CD14-positive monocyte (primary cell): ENCODE measurements at regions of chr1 and their contacts with region 1.

Region 1: GRCh38 chr1:204506961-204507387 is 9.2 kb upstream of the MDM4 start:
- DNase-seq: peak; percentile 93 to 94 (median 93)
- H3K4me3 ChIP-seq: peak overlapping the region; percentile 53 to 96 (median 88)
- H3K4me3 Mint-ChIP-seq: peak overlapping the region; percentile 92 to 95
- H3K27ac ChIP-seq: peak overlapping the region; percentile 72 to 91
- H3K27ac Mint-ChIP-seq: peak overlapping the region; percentile 85 to 95 (median 93)
- H3K4me1 ChIP-seq: peaks cover 32 to 38% of the 10 kb centered on the region in 2 donors
- H3K4me1 Mint-ChIP-seq: peaks cover 37% of the 10 kb centered on the region
- H3K27me3 ChIP-seq: no peaks in the 10 kb centered on the region
- H3K27me3 Mint-ChIP-seq: peaks cover 0 to 2% (median 0%) of the 10 kb centered on the region in 3 donors
- CTCF ChIP-seq: no peak

Region 2: GRCh38 chr1:204411451-204412204 is 95.3 kb before region 1 on chr1 and contains the start of gene PPP1R15B:
- intact Hi-C with region 1: loop called in 1 of 2 experiments (anchors 5 kb)
- DNase-seq: peak; percentile 97 to 100 (median 99)
- H3K4me3 ChIP-seq: peak within 1 kb of the TSS; percentile 93 to 95 (median 95)
- H3K4me3 Mint-ChIP-seq: peak within 1 kb of the TSS; percentile 97 to 99
- H3K27ac ChIP-seq: peak within 1 kb of the TSS; percentile 99 to 100
- H3K27ac Mint-ChIP-seq: peak within 1 kb of the TSS; percentile 100
- H3K4me1 ChIP-seq: peaks cover 31 to 50% of the 10 kb centered on the region in 2 donors
- H3K4me1 Mint-ChIP-seq: peaks cover 46% of the 10 kb centered on the region
- H3K27me3 ChIP-seq: no peaks in the 10 kb centered on the region
- H3K27me3 Mint-ChIP-seq: peaks cover 0 to 2% (median 0%) of the 10 kb centered on the region in 3 donors
- CTCF ChIP-seq: no peak
- polyA plus RNA-seq, gene PPP1R15B: 31.1 to 117 (median 31.8) TPM

Region 3: GRCh38 chr1:204446370-204447111 is 60.4 kb before region 1 on chr1:
- intact Hi-C with region 1: loop called (anchors 1 to 5 kb)
- DNase-seq: peak; percentile 52 to 67 (median 65)
- H3K4me3 ChIP-seq: no peak overlapping the region
- H3K4me3 Mint-ChIP-seq: no peak overlapping the region
- H3K27ac ChIP-seq: no peak overlapping the region
- H3K27ac Mint-ChIP-seq: peak overlapping the region in 1 of 7 donors; percentile 56
- H3K4me1 ChIP-seq: peaks cover 5 to 7% of the 10 kb centered on the region in 2 donors
- H3K4me1 Mint-ChIP-seq: peaks cover 13% of the 10 kb centered on the region
- H3K27me3 ChIP-seq: no peaks in the 10 kb centered on the region
- H3K27me3 Mint-ChIP-seq: peaks cover 0 to 5% (median 2%) of the 10 kb centered on the region in 3 donors
- CTCF ChIP-seq: peak; percentile 78

Region 4: GRCh38 chr1:204461331-204462228 is 45.4 kb before region 1 on chr1:
- intact Hi-C with region 1: no loop called
- DNase-seq: no peak
- H3K4me3 ChIP-seq: no peak overlapping the region
- H3K4me3 Mint-ChIP-seq: peak overlapping the region in 1 of 2 donors; percentile 35
- H3K27ac ChIP-seq: peak overlapping the region in 1 of 2 donors; percentile 3
- H3K27ac Mint-ChIP-seq: peak overlapping the region in 6 of 7 donors; percentile 50 to 86 (median 73)
- H3K4me1 ChIP-seq: peaks cover 24 to 25% of the 10 kb centered on the region in 2 donors
- H3K4me1 Mint-ChIP-seq: peaks cover 35% of the 10 kb centered on the region
- H3K27me3 ChIP-seq: no peaks in the 10 kb centered on the region
- H3K27me3 Mint-ChIP-seq: peaks cover 0 to 7% (median 5%) of the 10 kb centered on the region in 3 donors
- CTCF ChIP-seq: no peak